ENCODE measurements at regions of chr1 and their contacts with region 1.

Region 1: GRCh38 chr1:56831871-56832693 is 12.9 kb upstream of the FYB2 start:
- DNase-seq: peak; percentile 77
- ATAC-seq: peak; percentile 95
- H3K4me3 ChIP-seq: no peak overlapping the region
- H3K27ac ChIP-seq: peak overlapping the region; percentile 47
- H3K4me1 ChIP-seq: peaks cover 15% of the 10 kb centered on the region
- H3K27me3 ChIP-seq: peaks cover 31% of the 10 kb centered on the region
- CTCF ChIP-seq: peak; percentile 97

Region 2: DNA sequence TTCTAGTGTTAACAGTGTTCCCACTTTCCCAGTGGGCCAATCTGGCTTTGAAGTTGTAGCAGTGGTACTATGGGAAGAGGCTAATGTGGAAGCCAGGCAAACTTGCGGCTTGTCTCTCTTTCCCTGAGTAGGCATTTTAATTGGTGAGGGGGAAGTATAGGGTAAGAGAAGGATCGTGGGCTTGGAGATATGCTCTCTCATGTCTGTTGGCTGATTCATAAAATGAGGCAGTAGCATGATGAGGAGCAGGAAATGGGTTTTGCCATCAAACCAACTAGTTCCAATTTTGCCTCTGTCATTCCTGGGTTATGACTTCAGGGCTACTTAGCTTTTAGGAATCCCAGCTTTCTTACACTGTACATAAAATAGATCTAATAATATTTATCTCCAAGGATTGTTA is 34.6 kb after region 1 on chr1:
- CTCF ChIA-PET with region 1: no interaction called
- POLR2A ChIA-PET with region 1: no interaction called
- intact Hi-C with region 1: loop called (anchors 2 kb)
- DNase-seq: no peak
- ATAC-seq: no peak
- H3K4me3 ChIP-seq: no peak overlapping the region
- H3K27ac ChIP-seq: no peak overlapping the region
- H3K4me1 ChIP-seq: no peaks in the 10 kb centered on the region
- H3K27me3 ChIP-seq: peaks cover 37% of the 10 kb centered on the region
- CTCF ChIP-seq: no peak

Region 3: DNA sequence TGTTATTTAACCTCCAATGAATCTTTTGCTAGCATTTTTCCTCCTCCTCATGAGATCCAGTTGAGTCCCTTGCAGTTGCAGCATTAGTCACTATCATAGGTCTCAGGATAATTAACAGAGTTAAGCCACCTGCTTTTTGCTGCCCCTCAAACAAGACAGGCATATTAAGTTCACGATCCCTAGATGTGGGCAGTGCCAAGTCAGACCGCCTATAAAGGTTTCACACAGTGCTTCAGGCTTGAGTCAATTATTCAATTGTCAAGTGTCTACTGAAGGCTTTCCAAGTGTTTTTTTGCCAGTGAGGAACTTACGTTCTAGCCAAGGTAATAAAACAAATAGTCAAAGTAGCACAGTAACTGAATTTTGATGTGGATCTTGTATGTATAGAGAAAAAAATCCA is 416.7 kb after region 1 on chr1:
- CTCF ChIA-PET with region 1: no interaction called
- POLR2A ChIA-PET with region 1: no interaction called
- intact Hi-C with region 1: no loop called
- DNase-seq: no peak
- ATAC-seq: no peak
- H3K4me3 ChIP-seq: no peak overlapping the region
- H3K27ac ChIP-seq: no peak overlapping the region
- H3K4me1 ChIP-seq: no peaks in the 10 kb centered on the region
- H3K27me3 ChIP-seq: no peaks in the 10 kb centered on the region
- CTCF ChIP-seq: no peak

Region 4: GRCh38 chr1:58047265-58047858 is 1215.3 kb after region 1 on chr1:
- CTCF ChIA-PET with region 1: no interaction called
- POLR2A ChIA-PET with region 1: no interaction called
- intact Hi-C with region 1: loop called (anchors 5 kb)
- DNase-seq: peak; percentile 14
- ATAC-seq: no peak
- H3K4me3 ChIP-seq: no peak overlapping the region
- H3K27ac ChIP-seq: no peak overlapping the region
- H3K4me1 ChIP-seq: no peaks in the 10 kb centered on the region
- H3K27me3 ChIP-seq: no peaks in the 10 kb centered on the region; the same call in 1 of the 2 replicates
- CTCF ChIP-seq: peak; percentile 62

Region 5: GRCh38 chr1:58162952-58163550 is 1331.0 kb after region 1 on chr1:
- CTCF ChIA-PET with region 1: no interaction called
- POLR2A ChIA-PET with region 1: no interaction called
- intact Hi-C with region 1: loop called (anchors 1 kb)
- DNase-seq: peak; percentile 66
- ATAC-seq: peak; percentile 62
- H3K4me3 ChIP-seq: no peak overlapping the region
- H3K27ac ChIP-seq: no peak overlapping the region
- H3K4me1 ChIP-seq: no peaks in the 10 kb centered on the region
- H3K27me3 ChIP-seq: no peaks in the 10 kb centered on the region
- CTCF ChIP-seq: peak; percentile 86

Measured in PC-3 (cell line).